SK-MEL-5 (cell line): ENCODE measurements at regions of chr20 and their contacts with region 1.

Region 1: DNA sequence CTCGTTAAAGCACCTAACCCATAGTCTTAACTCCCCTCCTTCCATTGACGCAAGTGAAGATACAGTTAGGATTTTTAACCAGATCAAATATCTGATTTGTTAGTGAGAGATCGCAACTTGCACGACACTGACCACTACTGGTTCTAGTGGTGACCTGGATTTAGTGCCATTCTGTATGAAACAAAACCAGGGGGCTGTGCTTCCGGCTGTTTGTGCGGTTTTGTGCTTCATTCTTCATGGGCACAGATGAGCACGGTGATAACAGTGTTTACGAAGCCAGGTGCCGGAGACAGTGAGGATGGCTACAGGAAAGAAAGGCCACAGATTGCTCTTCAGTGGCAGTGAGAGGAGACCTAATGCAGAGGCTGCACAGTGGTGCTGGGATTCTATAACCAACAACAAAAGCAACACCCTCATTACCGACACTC is 75.5 kb downstream of the NOL4L start:
- DNase-seq: peak; percentile 38

Region 2: DNA sequence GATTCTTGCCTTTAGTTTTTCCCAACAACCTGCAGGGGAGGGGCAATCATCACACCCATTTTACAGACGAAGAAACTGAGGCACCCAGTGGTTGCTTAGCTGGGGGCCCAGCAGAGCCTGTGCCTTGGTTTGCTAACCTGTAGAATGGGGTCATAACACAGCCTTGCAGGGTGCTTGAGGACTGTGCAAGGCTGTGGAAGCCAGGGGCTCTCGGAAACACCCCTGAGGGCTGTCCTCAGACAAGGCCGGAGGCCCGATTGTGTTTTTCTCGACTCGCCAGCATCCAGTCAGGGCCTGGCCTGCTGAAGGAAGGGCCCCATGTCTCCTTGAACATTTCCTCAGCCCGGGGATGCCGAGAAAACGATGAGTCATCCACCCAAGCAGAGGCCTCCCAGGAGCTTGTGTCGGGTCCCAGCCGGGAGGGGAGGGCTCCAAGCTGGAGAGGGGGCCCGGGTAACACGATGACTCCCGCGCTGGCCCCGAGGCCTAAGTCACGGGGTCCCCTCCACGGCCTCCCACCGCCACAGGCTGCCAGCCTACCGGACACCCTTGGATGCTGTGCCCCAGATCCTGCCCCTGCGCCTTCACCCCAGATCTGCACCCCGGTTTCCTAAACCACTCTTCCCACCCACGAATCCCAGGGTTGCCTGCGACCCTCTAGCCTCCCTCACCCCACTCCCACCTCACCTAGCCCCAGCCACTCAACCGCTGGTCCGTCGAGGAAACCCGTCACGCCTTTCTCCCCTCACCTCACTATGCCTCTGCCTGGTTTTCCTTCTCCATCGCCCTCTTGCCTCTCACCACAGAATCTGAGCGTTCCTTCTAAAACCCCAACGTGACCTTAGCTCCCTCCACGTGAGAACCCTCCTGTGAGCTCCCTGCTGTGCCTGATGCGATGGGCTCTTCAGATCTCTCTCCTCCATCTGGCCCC is 64.9 kb after region 1 on chr20:
- in situ Hi-C with region 1: no loop called
- DNase-seq: no peak

Region 3: GRCh38 chr20:32638848-32639247 is 129.2 kb after region 1 on chr20:
- in situ Hi-C with region 1: loop called (anchors 10 kb)
- DNase-seq: no peak